ENCODE measurements at regions of chr6 and their contacts with region 1.

Region 1: DNA sequence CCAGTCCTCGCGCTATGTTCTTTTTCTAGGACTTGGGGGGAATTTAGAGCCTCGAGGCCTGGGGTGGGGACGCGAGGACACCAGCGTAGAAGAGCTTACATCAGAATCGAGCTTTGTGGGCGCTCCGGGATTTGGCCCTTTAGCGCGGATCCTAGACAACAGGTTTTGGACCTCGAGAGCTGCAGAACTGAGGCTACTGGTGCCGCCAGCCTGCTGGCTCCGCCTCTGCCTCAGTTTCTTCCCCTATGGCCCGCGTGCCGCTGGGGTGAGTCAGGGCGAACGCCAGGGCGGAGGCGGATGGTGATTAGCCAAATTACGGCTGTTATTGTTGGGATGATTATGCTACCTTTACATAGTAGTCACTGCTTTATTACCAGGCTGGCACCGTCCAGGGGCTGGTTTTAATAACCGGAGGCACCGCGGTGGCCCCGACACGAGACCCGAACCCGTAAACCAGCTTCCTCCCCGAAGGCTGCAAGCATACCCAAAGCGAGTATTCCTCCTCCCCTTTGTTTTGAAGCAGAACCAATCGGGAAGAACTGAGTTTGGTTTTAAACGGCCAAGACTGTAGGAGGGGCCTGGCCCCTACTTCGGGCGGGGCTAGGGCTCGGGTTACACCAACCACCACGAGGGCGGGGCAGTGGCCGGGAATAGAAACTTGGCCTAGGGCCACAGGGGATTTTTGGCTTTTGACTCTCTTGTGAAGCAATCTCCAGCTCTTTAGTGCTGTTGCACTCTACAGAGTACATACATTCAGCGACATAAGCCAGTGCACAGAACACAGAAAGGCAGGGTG is 639 bp upstream of the GTPBP2 start:
- DNase-seq: peak; percentile 95
- ATAC-seq: peak; percentile 66
- H3K4me3 ChIP-seq: peak overlapping the region; percentile 64 to 96 (median 90)
- H3K4me3 Mint-ChIP-seq: peak overlapping the region; percentile 100
- H3K27ac ChIP-seq: peak overlapping the region; percentile 70 to 84
- H3K27ac Mint-ChIP-seq: peak overlapping the region; percentile 99
- H3K4me1 ChIP-seq: peaks cover 22 to 33% of the 10 kb centered on the region in 2 donors
- H3K4me1 Mint-ChIP-seq: peaks cover 32% of the 10 kb centered on the region
- H3K27me3 ChIP-seq: no peaks in the 10 kb centered on the region
- H3K27me3 Mint-ChIP-seq: no peaks in the 10 kb centered on the region
- CTCF ChIP-seq: no peak

Region 2: DNA sequence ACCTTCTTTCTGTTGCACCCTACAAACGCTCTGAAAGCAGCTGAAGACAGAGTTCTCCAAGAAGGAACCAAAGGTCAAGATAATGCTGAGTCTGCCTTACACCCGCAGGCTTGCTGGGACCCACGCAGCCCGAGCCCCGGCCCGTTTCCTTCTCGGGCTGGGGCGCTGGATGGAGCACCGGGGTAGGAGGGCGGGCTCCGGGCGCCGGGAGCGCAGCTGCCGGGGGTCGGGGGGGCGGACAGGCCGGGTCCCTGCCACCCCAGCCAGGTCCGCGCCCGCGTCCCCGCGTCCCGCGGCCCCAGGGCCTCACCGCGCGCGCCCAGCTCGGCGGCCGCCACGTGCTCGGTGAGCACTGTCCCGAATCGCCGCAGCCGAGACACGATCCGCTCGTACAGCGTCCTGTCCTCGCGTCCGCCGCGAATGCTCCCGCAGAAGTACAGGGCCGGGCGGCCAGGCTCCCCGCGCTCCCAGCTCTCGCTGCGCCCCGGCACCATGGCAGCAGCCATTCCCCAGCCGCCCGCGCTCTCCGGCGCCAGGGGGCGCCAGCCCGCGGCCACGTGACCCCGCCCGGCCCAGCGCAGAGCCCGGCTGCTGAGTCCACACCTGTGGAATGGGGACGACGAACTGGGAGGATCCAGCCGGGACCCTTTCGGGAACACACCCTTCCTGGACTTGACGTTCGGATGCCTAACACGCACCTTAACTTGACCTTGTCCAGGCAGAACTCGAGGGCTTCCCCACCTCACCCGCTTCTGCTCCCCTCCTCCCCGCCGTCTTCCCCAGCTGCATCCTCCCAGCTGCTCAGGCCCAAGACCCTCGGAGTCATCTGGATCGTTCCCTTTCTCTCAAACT is 400.5 kb before region 1 on chr6 and contains the start of gene DNPH1:
- CTCF ChIA-PET with region 1: no interaction called
- POLR2A ChIA-PET with region 1: no interaction called
- intact Hi-C with region 1: loop called (anchors 10 kb)
- DNase-seq: peak; percentile 89
- ATAC-seq: peak; percentile 67
- H3K4me3 ChIP-seq: peak within 1 kb of the TSS; percentile 43 to 70 (median 61)
- H3K4me3 Mint-ChIP-seq: peak within 1 kb of the TSS; percentile 92
- H3K27ac ChIP-seq: peak within 1 kb of the TSS in 1 of 2 donors; percentile 73
- H3K27ac Mint-ChIP-seq: peak within 1 kb of the TSS; percentile 90
- H3K4me1 ChIP-seq: peaks cover 34 to 45% of the 10 kb centered on the region in 2 donors
- H3K4me1 Mint-ChIP-seq: peaks cover 29% of the 10 kb centered on the region
- H3K27me3 ChIP-seq: peaks cover 0 to 5% (median 0%) of the 10 kb centered on the region in 4 experiments
- H3K27me3 Mint-ChIP-seq: peaks cover 9% of the 10 kb centered on the region
- CTCF ChIP-seq: peak; percentile 95
- total RNA-seq, gene DNPH1: 25.8 and 29.0 TPM in 2 replicates

Region 3: GRCh38 chr6:43516697-43517504 is 112.8 kb before region 1 on chr6 and contains the starts of genes POLR1C and YIPF3:
- CTCF ChIA-PET with region 1: no interaction called
- POLR2A ChIA-PET with region 1: interaction called, 6 read pairs
- intact Hi-C with region 1: loop called (anchors 1 kb)
- DNase-seq: peak; percentile 97
- ATAC-seq: peak; percentile 96
- H3K4me3 ChIP-seq: peak within 1 kb of the TSS; percentile 78 to 98 (median 91)
- H3K4me3 Mint-ChIP-seq: no peak within 1 kb of the TSS
- H3K27ac ChIP-seq: peak within 1 kb of the TSS; percentile 65 to 91
- H3K27ac Mint-ChIP-seq: no peak within 1 kb of the TSS
- H3K4me1 ChIP-seq: peaks cover 28 to 36% of the 10 kb centered on the region in 2 donors
- H3K4me1 Mint-ChIP-seq: peaks cover 27% of the 10 kb centered on the region
- H3K27me3 ChIP-seq: no peaks in the 10 kb centered on the region
- H3K27me3 Mint-ChIP-seq: no peaks in the 10 kb centered on the region
- CTCF ChIP-seq: no peak
- total RNA-seq, gene POLR1C: 42.0 and 43.3 TPM in 2 replicates
- total RNA-seq, gene YIPF3: 82.1 and 92.6 TPM in 2 replicates

Region 4: DNA sequence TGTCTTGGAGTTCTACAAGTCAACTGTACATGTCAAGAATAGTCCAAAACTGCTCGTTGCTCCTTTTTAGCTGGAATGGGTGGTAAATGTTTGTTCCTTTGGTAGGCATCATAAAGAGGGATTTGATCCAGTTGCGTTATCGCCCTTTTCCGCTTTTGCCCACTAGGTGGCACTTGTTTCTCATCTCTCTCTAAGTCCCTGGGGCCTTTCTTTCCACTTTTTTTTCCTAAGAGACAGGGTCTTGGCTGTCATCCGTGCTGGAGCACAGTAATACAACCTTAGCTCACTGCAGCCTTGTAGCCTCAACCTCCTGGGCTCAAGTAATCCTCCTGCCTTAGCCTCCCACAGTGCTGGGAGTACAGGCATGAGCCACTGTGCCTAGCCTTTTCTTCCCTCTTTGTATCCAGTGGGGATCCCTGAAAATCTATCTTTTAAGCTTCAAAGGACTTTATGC is 21.4 kb before region 1 on chr6:
- CTCF ChIA-PET with region 1: interaction called, 14 read pairs
- POLR2A ChIA-PET with region 1: interaction called, 4 read pairs
- intact Hi-C with region 1: no loop called
- DNase-seq: peak; percentile 70
- ATAC-seq: peak; percentile 49
- H3K4me3 ChIP-seq: no peak overlapping the region
- H3K4me3 Mint-ChIP-seq: no peak overlapping the region
- H3K27ac ChIP-seq: peak overlapping the region in 1 of 2 donors; percentile 55
- H3K27ac Mint-ChIP-seq: no peak overlapping the region
- H3K4me1 ChIP-seq: peaks cover 10 to 11% of the 10 kb centered on the region in 2 donors
- H3K4me1 Mint-ChIP-seq: peaks cover 12% of the 10 kb centered on the region
- H3K27me3 ChIP-seq: no peaks in the 10 kb centered on the region
- H3K27me3 Mint-ChIP-seq: no peaks in the 10 kb centered on the region
- CTCF ChIP-seq: peak; percentile 86

Region 5: GRCh38 chr6:43687437-43688347 is 58.0 kb after region 1 on chr6 and contains the start of gene MRPS18A:
- CTCF ChIA-PET with region 1: no interaction called
- POLR2A ChIA-PET with region 1: no interaction called
- intact Hi-C with region 1: loop called (anchors 1 kb)
- DNase-seq: peak; percentile 83
- ATAC-seq: peak; percentile 92
- H3K4me3 ChIP-seq: peak within 1 kb of the TSS; percentile 80 to 98 (median 96)
- H3K4me3 Mint-ChIP-seq: peak within 1 kb of the TSS; percentile 97
- H3K27ac ChIP-seq: peak within 1 kb of the TSS; percentile 76 to 90
- H3K27ac Mint-ChIP-seq: peak within 1 kb of the TSS; percentile 92
- H3K4me1 ChIP-seq: peaks cover 37 to 42% of the 10 kb centered on the region in 2 donors
- H3K4me1 Mint-ChIP-seq: peaks cover 48% of the 10 kb centered on the region
- H3K27me3 ChIP-seq: no peaks in the 10 kb centered on the region
- H3K27me3 Mint-ChIP-seq: no peaks in the 10 kb centered on the region
- CTCF ChIP-seq: no peak
- total RNA-seq, gene MRPS18A: 37.0 and 39.6 TPM in 2 replicates

Region 6: GRCh38 chr6:43817192-43817591 is 187.5 kb after region 1 on chr6:
- CTCF ChIA-PET with region 1: no interaction called
- POLR2A ChIA-PET with region 1: no interaction called
- intact Hi-C with region 1: no loop called
- DNase-seq: peak; percentile 31
- ATAC-seq: peak; percentile 57
- H3K4me3 ChIP-seq: no peak overlapping the region
- H3K4me3 Mint-ChIP-seq: no peak overlapping the region
- H3K27ac ChIP-seq: no peak overlapping the region
- H3K27ac Mint-ChIP-seq: no peak overlapping the region
- H3K4me1 ChIP-seq: no peaks in the 10 kb centered on the region
- H3K4me1 Mint-ChIP-seq: no peaks in the 10 kb centered on the region
- H3K27me3 ChIP-seq: peaks cover 0 to 2% (median 0%) of the 10 kb centered on the region in 4 experiments
- H3K27me3 Mint-ChIP-seq: peaks cover 17% of the 10 kb centered on the region
- CTCF ChIP-seq: peak; percentile 10